ENCODE measurements at regions of chr12 and their contacts with region 1.

Region 1: DNA sequence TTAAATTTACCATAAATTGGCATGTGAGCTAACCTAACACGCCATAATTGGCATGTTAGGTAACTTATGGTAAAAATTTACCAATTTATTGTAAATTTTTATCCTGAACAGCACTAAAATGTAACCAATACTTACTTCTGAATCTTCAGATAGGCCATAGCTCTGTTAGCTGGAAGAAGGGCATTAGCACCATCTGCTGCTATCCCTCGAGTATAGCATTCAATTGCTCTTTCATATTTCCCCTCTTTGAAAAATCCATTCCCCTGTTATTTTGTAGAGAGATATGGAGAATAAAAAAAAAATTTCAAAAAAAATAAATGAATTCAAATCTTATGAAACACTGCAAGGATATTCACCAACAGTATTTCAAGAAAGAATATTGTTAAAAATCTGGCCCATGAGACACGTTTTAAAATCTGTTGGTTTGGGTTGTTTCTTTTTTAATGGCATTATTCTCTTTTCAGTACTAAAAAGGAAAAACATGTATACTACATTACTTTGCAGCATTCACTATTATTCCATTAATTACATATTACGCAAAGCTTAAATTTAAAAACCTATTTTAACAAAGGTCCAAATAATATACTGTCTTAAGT is 19.1 kb downstream of the RPAP3 start:
- DNase-seq: peak; percentile 44
- H3K4me3 ChIP-seq: no peak overlapping the region
- H3K27ac ChIP-seq: no peak overlapping the region
- H3K4me1 ChIP-seq: no peaks in the 10 kb centered on the region
- H3K27me3 ChIP-seq: no peaks in the 10 kb centered on the region
- CTCF ChIP-seq: peak; percentile 83
- EP300 ChIP-seq: no peak
- RAD21 ChIP-seq: peak; percentile 84

Region 2: DNA sequence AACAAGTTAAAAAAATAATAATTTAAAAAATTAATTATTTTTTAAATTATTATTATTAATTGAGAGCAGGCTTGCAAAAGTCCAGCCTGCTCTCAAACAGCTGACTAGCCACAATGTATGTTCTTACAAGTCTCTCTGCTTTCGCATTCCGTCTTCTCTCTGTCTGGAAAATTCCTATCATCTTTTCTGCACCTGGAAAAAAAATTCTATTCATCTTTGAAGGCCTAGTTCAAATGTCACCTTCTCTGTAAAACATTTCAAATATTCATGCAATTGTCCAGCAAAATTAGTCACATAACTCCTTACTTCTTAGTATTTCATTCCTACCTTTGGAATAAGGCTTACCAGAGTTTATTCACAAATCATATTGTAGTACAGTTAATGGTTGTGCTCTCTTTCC is 56.4 kb before region 1 on chr12:
- CTCF ChIA-PET with region 1: no interaction called
- POLR2A ChIA-PET with region 1: no interaction called
- DNase-seq: no peak
- H3K4me3 ChIP-seq: no peak overlapping the region
- H3K27ac ChIP-seq: no peak overlapping the region
- H3K4me1 ChIP-seq: no peaks in the 10 kb centered on the region
- H3K27me3 ChIP-seq: no peaks in the 10 kb centered on the region
- CTCF ChIP-seq: no peak
- EP300 ChIP-seq: no peak
- RAD21 ChIP-seq: no peak

Region 3: DNA sequence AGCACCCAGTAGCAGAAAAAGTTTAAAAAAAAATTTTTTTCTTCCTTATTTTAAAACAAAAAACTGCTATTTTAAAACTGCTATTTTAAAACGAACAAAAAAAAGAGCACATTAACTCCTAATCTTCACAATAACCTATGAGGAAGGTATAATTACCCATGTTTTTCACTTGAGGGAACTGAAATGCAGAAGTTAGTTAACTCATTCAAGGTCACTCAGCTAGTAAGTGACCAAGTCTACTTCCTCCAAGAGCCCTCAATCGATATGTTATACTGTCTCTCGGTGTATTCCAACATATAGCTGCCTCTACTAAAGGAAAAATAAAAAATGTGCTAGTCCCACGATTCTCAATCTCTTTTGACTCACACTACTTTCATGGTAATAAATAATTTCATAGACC is 11.3 kb after region 1 on chr12:
- CTCF ChIA-PET with region 1: interaction called, 22 read pairs
- POLR2A ChIA-PET with region 1: no interaction called
- DNase-seq: no peak
- H3K4me3 ChIP-seq: no peak overlapping the region
- H3K27ac ChIP-seq: no peak overlapping the region
- H3K4me1 ChIP-seq: no peaks in the 10 kb centered on the region
- H3K27me3 ChIP-seq: no peaks in the 10 kb centered on the region
- CTCF ChIP-seq: no peak
- EP300 ChIP-seq: no peak
- RAD21 ChIP-seq: no peak

Measured in SK-N-SH (cell line).